MCF 10A (cell line): ENCODE measurements at regions of chr12 and their contacts with region 1.

Region 1: DNA sequence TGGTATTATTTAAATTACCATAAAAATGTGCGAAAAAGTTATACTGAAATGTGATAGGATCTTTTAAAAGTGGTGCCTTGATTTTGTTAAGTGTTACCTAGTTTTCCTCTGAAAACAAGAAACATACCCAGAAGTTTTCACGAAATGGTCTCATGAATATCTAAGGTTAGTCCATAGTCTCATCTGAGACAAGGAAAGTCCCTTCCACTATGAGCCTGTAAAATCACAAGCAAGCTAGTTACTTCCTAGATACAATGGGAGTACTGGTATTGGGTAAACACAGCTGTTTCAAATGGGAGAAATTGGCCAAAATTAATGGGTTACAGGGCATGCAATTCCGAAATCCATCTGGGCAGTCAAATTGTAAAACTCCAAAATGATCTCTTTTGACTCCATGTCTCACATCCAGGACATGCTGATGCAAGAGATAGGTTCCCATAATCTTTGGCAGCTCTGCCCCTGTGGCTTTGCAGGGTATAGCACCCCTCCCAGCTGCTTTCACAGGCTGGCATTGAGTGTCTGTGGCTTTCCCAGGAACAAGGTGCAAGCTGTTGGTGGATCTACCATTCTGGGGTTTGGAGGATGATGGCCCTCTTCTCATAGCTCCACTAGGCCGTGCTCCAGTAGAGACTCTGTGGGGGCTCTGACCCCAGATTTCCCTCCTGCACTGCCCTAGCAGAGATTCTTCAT is 271.4 kb downstream of the NAV3 start:
- DNase-seq: peak; percentile 20
- H3K4me3 Mint-ChIP-seq: no peak overlapping the region
- H3K27ac Mint-ChIP-seq: no peak overlapping the region
- H3K4me1 Mint-ChIP-seq: no peaks in the 10 kb centered on the region
- H3K27me3 Mint-ChIP-seq: no peaks in the 10 kb centered on the region
- CTCF ChIP-seq: no peak

Region 2: GRCh38 chr12:77736219-77736965 is 365.7 kb before region 1 on chr12:
- CTCF ChIA-PET with region 1: no interaction called
- POLR2A ChIA-PET with region 1: no interaction called
- intact Hi-C with region 1: no loop called
- DNase-seq: no peak
- H3K4me3 Mint-ChIP-seq: no peak overlapping the region
- H3K27ac Mint-ChIP-seq: no peak overlapping the region
- H3K4me1 Mint-ChIP-seq: peaks cover 6% of the 10 kb centered on the region
- H3K27me3 Mint-ChIP-seq: no peaks in the 10 kb centered on the region
- CTCF ChIP-seq: no peak

Region 3: DNA sequence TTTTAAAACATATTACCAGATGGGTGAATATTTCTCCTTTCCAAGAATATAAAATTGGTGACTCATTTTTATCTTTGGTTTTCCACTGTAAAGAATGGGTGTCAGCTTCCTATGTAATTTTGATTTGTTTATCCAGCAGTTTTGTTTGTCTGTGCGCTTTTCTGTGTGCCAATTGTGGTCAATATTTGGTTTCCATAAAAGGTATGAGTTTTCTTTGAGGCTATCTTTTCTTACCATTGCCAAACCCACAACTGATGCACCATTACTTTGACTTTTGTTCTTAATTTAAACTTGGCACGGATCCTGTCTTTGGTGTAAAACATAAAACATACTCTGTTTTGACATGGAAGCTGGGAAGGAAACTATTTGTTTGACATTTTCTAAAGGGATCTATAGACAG is 350.2 kb before region 1 on chr12:
- CTCF ChIA-PET with region 1: no interaction called
- POLR2A ChIA-PET with region 1: no interaction called
- intact Hi-C with region 1: no loop called
- DNase-seq: peak; percentile 56
- H3K4me3 Mint-ChIP-seq: no peak overlapping the region
- H3K27ac Mint-ChIP-seq: no peak overlapping the region
- H3K4me1 Mint-ChIP-seq: peaks cover 4% of the 10 kb centered on the region
- H3K27me3 Mint-ChIP-seq: peaks cover 12% of the 10 kb centered on the region
- CTCF ChIP-seq: no peak

Region 4: DNA sequence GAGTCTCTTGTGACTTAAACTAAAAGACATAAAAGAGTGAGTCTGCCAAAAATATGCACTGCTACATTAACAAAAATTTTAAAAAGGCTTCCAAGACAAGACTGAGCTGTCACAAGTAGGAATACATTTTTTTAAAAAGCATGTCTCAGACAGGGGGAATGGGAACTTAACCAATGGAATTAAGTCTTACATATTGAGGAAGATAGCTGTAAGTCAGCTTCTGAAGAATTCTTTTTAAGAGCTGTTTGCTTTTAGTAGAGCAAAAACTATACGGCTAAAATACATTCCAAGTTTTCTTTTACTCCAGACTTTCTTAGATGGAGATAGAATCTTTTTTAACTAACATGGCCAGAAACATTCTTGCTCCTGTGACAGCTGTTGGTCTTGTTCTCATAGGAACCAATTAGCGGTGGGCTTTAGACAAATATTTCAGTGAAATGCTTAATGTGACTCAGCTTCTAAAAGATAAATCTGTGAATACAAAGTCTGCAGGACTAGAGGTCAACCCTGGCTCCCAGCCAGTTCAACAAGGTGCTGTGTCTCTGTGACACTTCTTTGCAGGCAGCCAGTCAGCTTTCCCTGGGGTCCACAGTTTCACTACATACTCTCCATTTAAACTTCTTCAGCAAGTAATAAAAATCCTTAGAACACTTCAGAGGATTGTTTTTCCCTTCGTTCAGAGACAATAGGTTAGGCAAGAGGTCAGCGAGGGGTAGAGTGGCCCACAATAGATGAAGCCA is 83.8 kb before region 1 on chr12:
- CTCF ChIA-PET with region 1: no interaction called
- POLR2A ChIA-PET with region 1: no interaction called
- intact Hi-C with region 1: loop called (anchors 5 kb)
- DNase-seq: peak; percentile 35
- H3K4me3 Mint-ChIP-seq: no peak overlapping the region
- H3K27ac Mint-ChIP-seq: no peak overlapping the region
- H3K4me1 Mint-ChIP-seq: peaks cover 11% of the 10 kb centered on the region
- H3K27me3 Mint-ChIP-seq: no peaks in the 10 kb centered on the region
- CTCF ChIP-seq: no peak

Region 5: DNA sequence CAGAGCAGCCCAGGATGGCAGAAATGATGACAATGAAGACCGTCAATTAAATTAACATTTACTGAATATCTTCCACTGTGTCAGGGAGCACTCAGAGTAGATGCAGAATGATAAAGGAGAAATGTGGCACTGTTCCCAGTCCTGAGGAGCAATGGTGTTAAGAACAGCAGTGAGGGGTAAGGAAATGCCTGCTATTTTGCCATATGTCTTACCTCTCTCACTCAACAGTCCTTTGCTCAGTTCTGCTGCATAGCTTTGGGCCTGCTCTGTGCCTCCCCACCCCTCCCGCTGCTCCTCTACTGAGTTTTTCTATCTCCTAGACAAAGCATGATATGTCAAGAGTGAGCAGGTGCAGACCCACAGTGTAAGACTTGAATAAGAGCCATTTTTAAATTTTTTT is 47.4 kb after region 1 on chr12:
- CTCF ChIA-PET with region 1: no interaction called
- POLR2A ChIA-PET with region 1: no interaction called
- intact Hi-C with region 1: no loop called
- DNase-seq: no peak
- H3K4me3 Mint-ChIP-seq: no peak overlapping the region
- H3K27ac Mint-ChIP-seq: peak overlapping the region; percentile 48
- H3K4me1 Mint-ChIP-seq: no peaks in the 10 kb centered on the region
- H3K27me3 Mint-ChIP-seq: no peaks in the 10 kb centered on the region
- CTCF ChIP-seq: no peak